Astrocyte of the cerebellum (primary cell): ENCODE measurements at regions of chr13 and their contacts with region 1.

Region 1: DNA sequence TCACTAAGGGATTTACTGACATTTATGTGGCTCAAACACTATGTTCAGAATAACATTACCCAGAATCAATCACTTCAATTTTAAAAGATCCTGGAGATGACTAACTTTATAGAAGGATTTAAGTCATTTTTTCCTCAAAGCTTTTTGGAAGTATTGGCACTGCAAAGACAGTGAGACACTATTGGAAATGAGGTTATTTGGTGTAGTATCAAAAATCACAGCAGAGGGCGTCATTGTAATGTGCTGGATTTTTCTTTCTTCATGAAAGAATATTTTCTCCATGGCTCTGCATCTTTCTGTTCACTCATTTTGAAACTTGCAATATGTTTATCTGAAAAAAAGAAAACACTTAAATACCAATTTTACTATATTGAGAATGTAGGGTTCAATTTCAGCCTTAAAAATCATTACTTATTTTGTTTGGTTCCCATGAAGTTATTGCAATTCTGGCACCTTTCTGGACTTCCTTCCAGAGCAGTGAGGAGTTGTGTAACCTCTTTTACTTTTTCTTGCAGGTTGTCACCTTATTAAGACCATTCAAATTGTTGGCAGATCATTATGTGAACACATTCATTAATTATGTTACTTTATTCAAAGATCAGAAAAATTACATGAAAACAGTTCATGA is 3.7 kb upstream of the CSNK1A1L start:
- DNase-seq: peak; percentile 41
- H3K4me3 ChIP-seq: no peak overlapping the region
- CTCF ChIP-seq: peak; percentile 48

Region 2: GRCh38 chr13:37187105-37187504 is 77.9 kb after region 1 on chr13:
- in situ Hi-C with region 1: loop called (anchors 5 kb)
- DNase-seq: peak; percentile 79
- H3K4me3 ChIP-seq: no peak overlapping the region
- CTCF ChIP-seq: no peak

Region 3: DNA sequence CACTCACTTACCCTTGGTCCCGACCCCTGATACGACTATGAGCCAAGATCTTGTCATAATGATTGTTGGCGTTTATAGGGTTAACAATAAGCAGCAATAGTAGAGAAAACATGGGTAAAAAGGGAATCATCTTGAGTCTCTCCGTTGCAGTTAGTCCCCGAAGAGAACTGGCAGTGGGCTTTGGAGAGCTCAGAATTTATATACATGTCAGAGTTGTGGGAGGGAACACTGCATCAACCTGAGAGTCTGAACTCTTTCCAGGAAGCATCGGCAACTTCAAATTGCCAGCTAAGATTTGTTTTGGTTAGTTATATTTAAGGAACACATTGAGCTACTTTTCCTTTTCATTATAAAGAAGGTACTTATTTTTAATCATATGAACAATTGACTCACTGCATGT is 489.4 kb after region 1 on chr13 and contains the start of gene POSTN:
- in situ Hi-C with region 1: loop called (anchors 25 kb)
- DNase-seq: no peak
- H3K4me3 ChIP-seq: peak within 1 kb of the TSS; percentile 32
- CTCF ChIP-seq: no peak